AG04449 (cell line): ENCODE measurements at regions of chr3 and their contacts with region 1.

Region 1: DNA sequence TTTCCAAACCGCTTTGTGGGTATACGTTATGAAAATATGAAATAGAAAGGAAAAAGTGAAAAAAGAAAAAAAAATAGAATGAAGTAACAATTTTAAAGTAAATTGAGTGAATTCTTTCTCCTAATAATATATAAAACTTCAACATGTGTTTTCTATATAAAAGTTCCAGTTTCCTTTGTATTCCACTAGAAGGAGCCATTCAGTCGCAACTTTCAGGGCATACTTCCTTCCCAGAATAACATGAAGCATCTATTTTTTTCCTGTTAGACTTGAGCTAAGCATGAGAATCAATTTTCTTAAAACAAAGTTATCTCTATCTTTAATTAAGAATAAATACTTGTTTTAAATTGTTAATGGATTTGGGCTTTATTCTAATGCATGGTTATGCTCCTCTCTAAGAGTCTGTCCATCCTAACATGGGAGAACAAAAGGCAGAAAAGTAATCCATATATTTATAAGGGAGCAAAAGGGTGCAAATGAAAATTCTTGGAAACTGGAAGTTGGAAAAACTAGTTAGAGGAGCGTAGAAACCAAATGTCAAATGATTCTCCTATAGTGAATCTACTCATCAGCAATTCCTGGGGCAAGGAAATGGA is 16.0 kb upstream of the VGLL3 start:
- DNase-seq: no peak
- H3K4me3 ChIP-seq: no peak overlapping the region
- CTCF ChIP-seq: peak; percentile 29

Region 2: DNA sequence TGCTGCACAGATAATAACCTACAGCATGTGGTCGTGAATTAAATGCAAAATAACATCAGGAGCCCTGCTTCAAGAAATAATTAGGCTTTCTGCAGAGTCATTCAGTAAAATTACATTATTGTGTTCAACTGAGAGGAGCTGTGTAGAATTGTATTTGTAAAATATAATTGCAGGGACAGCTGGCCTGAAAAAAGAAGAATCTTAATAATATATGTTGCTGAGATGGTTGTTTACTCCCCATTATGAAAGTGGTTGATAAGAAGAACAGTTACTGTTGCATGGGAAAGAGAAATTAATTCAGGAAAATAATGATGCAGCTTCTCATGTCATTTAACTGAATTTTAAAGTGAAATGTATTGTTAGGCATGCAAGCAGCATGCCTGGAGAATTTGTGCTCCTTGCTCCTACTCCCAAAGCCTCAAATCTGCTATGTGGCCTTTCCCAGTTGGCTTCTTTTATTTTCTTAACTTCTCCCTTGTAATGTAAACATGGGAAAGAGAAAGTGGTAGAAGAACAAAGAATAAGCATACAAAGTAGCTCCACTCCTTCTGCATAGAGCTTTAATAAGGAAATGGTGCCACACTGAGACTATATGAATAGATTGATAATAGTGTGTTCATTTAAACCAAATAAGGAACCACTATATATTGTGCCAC is 116.1 kb before region 1 on chr3:
- CTCF ChIA-PET with region 1: no interaction called
- POLR2A ChIA-PET with region 1: no interaction called
- DNase-seq: no peak
- H3K4me3 ChIP-seq: no peak overlapping the region
- CTCF ChIP-seq: no peak

Region 3: GRCh38 chr3:86995537-86995936 is 11.4 kb before region 1 on chr3:
- CTCF ChIA-PET with region 1: interaction called, 10 read pairs
- POLR2A ChIA-PET with region 1: no interaction called
- DNase-seq: peak; percentile 75
- H3K4me3 ChIP-seq: no peak overlapping the region
- CTCF ChIP-seq: no peak

Region 4: DNA sequence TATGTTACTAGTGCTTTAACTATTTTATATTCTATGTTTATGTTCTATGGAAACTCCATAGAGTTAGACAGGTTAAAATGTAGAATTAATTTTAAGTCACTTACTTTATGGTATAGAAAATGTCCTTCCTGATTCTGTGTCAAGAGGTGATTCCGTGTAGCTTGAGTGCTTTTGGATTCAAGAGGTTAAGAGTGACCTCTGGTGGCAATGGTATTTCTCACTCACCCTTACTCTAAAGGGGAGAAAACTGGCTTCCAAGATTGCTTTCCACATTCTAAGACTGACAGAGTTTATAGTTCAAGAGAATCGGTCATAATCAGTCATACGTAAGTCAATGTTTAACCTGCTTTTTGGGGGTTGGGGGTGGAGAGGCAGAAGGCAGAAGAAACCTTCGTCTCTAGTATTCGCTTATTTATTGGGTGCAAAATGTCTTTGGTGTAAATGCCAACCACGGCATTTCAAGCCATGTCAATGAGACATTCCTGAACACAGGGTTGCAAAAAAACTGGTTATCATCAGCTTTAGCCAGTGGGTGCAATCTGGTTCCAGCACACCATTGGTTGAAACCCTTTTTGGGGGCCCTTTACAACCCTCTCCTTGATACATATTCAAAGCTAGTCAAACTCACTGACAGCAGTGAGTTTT is 76.0 kb after region 1 on chr3:
- CTCF ChIA-PET with region 1: interaction called, 35 read pairs
- POLR2A ChIA-PET with region 1: no interaction called
- DNase-seq: no peak
- H3K4me3 ChIP-seq: no peak overlapping the region
- CTCF ChIP-seq: peak; percentile 61